Prostate gland (tissue), 2 donors: ENCODE measurements at regions of chr11 and their contacts with region 1.

Region 1: DNA sequence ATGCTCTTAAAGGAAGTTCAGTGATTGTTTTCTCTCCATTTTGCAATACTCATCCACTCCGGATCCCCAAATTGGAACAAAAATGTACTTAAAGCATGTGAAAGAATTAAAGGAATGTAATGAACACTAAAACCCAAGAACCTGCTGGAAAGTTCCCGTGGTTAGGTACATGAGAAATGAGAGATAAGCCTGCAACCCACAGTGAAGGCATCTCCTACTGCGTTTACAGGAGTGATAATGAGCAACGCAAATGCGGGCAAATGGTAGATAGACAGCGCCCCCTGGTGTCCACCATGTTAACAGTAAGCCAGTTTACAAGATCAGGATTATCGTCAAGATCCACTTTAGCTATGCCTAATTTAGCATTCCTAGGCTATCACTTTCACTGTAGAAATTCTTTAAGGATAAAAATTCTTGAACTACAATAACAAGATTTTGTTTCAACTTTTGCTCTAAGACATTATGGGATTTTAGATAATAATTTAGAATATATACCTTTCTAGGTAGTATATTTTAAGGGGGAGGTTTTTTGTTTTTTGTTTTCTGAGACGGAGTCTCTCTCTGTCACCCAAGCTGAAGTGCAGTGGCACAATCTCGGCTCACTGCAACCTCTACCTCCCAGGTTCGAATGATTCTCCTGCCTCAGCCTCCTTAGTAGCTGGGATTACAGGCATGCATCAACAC is 29.9 kb downstream of the ALG9 start:
- DNase-seq: peak; percentile 93
- H3K4me3 ChIP-seq: no peak overlapping the region
- H3K27ac ChIP-seq: peak overlapping the region; percentile 51 to 61
- H3K4me1 ChIP-seq: no peaks in the 10 kb centered on the region
- H3K27me3 ChIP-seq: no peaks in the 10 kb centered on the region
- CTCF ChIP-seq: peak; percentile 90 to 97 (median 93)
- POLR2A ChIP-seq: no peak

Region 2: GRCh38 chr11:111565114-111565720 is 276.3 kb before region 1 on chr11:
- intact Hi-C with region 1: loop called (anchors 2 kb)
- DNase-seq: peak; percentile 68
- H3K4me3 ChIP-seq: no peak overlapping the region
- H3K27ac ChIP-seq: no peak overlapping the region
- H3K4me1 ChIP-seq: no peaks in the 10 kb centered on the region
- H3K27me3 ChIP-seq: no peaks in the 10 kb centered on the region
- CTCF ChIP-seq: peak; percentile 68 to 85 (median 76)
- POLR2A ChIP-seq: no peak

Region 3: GRCh38 chr11:111586388-111586831 is 255.1 kb before region 1 on chr11:
- intact Hi-C with region 1: loop called (anchors 5 kb)
- DNase-seq: peak; percentile 54
- H3K4me3 ChIP-seq: no peak overlapping the region
- H3K27ac ChIP-seq: no peak overlapping the region
- H3K4me1 ChIP-seq: no peaks in the 10 kb centered on the region
- H3K27me3 ChIP-seq: no peaks in the 10 kb centered on the region
- CTCF ChIP-seq: peak in 3 of 4 experiments; percentile 37 to 64 (median 63)
- POLR2A ChIP-seq: no peak

Region 4: DNA sequence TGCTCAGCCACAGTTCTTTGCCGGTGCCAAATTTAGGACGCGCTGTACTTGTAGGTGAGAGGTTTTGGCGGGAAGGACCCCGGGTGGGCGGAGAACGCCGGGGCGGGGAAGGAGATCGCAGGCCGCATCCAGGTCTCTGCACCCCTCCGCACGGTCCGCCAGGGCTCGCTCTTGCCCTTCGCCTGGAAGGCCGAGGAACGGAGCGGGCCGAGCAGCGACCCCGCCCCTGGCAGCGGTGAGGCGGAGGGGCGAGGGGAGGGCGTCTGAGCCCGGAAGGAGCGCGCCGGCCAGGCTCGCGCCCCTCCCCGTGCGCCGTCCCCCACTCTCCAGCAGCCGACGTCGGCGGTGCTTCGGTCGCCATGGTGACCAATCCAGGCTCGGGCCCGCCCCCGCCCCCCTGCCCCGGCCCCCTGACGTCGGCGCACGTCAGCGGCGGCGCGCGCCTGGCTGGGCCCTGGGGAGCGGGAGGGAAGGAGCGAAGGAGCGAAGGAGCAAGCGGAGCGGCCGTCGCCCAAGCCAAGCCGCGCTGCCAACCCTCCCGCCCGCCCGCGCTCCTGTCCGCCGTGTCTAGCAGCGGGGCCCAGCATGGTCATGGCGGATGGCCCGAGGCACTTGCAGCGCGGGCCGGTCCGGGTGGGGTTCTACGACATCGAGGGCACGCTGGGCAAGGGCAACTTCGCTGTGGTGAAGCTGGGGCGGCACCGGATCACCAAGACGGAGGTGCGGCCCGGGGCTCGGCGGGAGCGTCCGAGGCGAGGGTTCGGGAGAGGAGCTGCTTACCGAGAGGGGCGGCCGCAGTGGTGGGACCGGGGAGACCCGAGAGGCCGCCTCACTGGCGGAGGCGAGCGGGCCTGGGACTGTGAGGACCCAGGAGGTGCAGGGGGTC is 239.3 kb before region 1 on chr11 and contains the start of gene SIK2:
- intact Hi-C with region 1: loop called (anchors 2 kb)
- DNase-seq: peak; percentile 94
- H3K4me3 ChIP-seq: peak within 1 kb of the TSS; percentile 79 to 90
- H3K27ac ChIP-seq: peak within 1 kb of the TSS; percentile 96 to 97
- H3K4me1 ChIP-seq: no peaks in the 10 kb centered on the region
- H3K27me3 ChIP-seq: no peaks in the 10 kb centered on the region
- CTCF ChIP-seq: peak; percentile 86 to 99 (median 95)
- POLR2A ChIP-seq: peak; percentile 53
- total RNA-seq, gene SIK2: 13.0 to 18.7 TPM

Region 5: DNA sequence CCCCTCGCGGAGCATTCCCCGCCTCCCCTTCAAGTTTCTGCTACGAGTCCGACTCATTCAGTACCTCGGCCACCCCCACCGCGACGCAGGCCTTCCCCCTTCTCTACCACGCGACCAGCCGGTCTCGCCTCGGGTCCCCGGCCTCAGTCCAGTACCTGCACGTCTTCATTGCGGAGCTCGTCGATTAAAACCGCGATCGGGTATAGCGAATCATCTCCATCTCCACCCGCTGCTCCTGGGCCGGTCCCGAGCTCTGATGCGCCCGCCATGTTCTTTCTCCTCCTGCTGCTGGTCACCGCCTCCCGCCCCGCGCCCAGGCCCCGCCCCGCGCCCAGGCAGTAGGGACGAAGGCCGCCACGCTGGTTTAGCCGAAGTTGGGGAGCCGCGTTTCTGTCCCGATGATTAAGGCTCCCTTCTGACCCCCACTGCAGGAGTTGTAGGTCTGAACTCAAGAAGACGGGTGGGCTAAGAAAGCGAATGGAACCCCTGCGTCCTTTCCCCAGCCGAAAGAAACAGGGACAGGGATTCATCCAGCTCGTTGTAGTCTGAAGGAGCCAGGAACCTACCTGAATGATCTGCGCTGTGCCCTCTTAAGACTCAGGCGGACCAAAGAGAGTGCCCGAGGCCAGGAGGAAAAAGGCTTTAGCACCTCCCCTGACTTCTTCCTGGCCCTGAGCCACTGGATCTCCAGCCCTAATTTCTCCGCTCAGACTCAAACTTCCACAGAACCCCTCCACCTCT is 75.2 kb before region 1 on chr11 and contains the start of gene PPP2R1B:
- intact Hi-C with region 1: loop called (anchors 5 kb)
- DNase-seq: peak; percentile 82
- H3K4me3 ChIP-seq: peak within 1 kb of the TSS; percentile 64 to 91
- H3K27ac ChIP-seq: peak within 1 kb of the TSS; percentile 87 to 93
- H3K4me1 ChIP-seq: no peaks in the 10 kb centered on the region
- H3K27me3 ChIP-seq: no peaks in the 10 kb centered on the region
- CTCF ChIP-seq: no peak
- POLR2A ChIP-seq: peak; percentile 67
- total RNA-seq, gene PPP2R1B: 15.4 to 41.4 TPM

Region 6: DNA sequence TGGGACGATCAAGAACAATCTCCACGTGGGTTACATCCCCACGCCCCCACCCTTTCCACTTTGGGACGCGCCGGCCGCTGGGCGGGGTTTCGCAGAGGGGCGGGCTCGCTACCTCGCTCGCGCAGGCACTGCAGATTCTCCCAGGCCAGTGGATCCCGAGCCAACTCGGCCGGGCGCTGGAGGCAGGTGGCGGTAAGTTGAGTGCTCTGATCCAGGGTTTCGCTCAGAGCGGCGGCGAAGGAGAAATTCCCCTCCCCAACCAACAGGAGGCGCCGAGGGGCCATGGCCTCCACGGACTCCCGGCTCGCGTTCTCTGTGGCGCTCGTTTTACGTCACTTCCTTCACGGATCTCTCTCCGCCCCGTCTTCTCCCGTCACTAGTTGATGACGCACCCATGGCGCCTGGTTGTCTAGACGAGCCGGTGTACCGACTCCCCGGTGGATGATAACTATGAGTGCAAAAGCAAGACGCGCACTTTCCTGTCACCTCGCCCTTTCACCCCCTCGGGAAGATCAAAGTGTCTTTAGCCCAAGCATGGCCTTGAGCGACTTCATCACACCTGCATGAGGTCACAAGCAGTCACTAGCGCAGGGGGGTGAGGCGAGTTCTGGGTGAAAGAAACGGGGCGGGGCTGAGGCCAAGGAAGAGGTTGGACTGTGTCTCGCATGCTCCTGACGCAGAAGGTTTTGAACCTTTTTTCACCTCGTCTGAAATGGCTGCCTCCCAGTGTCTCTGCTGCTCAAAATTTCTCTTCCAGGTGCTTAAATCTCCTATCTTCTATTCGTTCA is 37.5 kb after region 1 on chr11 and contains the starts of genes CFAP68 and FDXACB1:
- intact Hi-C with region 1: no loop called
- DNase-seq: peak; percentile 98
- H3K4me3 ChIP-seq: peak within 1 kb of the TSS; percentile 47 to 55
- H3K27ac ChIP-seq: peak within 1 kb of the TSS; percentile 97
- H3K4me1 ChIP-seq: no peaks in the 10 kb centered on the region
- H3K27me3 ChIP-seq: no peaks in the 10 kb centered on the region
- CTCF ChIP-seq: peak; percentile 93 to 100 (median 97)
- POLR2A ChIP-seq: peak; percentile 30
- total RNA-seq, gene CFAP68: 42.2 to 46.2 TPM
- total RNA-seq, gene FDXACB1: 2.7 to 7.6 TPM

Region 7: GRCh38 chr11:111982019-111982464 is 140.5 kb after region 1 on chr11:
- intact Hi-C with region 1: no loop called
- DNase-seq: peak; percentile 87
- H3K4me3 ChIP-seq: peak overlapping the region; percentile 17 to 28
- H3K27ac ChIP-seq: peak overlapping the region; percentile 84 to 85
- H3K4me1 ChIP-seq: no peaks in the 10 kb centered on the region
- H3K27me3 ChIP-seq: no peaks in the 10 kb centered on the region
- CTCF ChIP-seq: peak; percentile 55 to 93 (median 84)
- POLR2A ChIP-seq: no peak